ENCODE measurements at regions of chr11 and their contacts with region 1.

Region 1: GRCh38 chr11:60775420-60775961 is 9.6 kb upstream of the MS4A10 start:
- DNase-seq: peak; percentile 95 to 98 (median 97)
- H3K4me3 ChIP-seq: no peak overlapping the region
- H3K27ac ChIP-seq: no peak overlapping the region
- H3K4me1 ChIP-seq: peaks cover 0 to 3% (median 0%) of the 10 kb centered on the region in 4 experiments
- H3K27me3 ChIP-seq: peaks cover 0 to 2% (median 0%) of the 10 kb centered on the region in 5 experiments

Region 2: GRCh38 chr11:60762851-60763691 is 12.4 kb before region 1 on chr11:
- CTCF ChIA-PET with region 1: interaction called, 100 read pairs
- POLR2A ChIA-PET with region 1: no interaction called
- DNase-seq: peak; percentile 22 to 42 (median 38)
- H3K4me3 ChIP-seq: no peak overlapping the region
- H3K27ac ChIP-seq: no peak overlapping the region
- H3K4me1 ChIP-seq: peaks cover 4 to 22% (median 16%) of the 10 kb centered on the region in 4 experiments
- H3K27me3 ChIP-seq: peaks cover 0 to 4% (median 0%) of the 10 kb centered on the region in 5 experiments

Region 3: DNA sequence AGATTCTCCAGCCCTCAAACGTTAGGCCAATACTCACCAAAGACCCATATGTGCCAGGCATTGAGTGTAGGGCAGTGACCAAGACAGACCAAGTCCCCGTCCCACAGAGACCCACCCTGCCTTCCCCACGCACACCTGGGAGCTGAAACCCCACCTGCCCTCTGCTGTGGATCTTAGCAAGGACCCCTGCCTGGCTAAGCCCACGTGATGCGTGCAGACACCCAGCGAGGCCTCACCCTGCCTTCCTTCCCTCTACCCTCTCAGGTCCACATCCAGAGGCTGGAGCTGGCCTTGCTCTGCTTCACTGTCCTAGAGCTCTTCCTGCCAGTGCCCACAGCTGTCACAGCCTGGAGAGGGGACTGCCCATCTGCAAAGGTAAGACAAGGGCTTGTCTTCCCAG is 19.8 kb after region 1 on chr11:
- CTCF ChIA-PET with region 1: interaction called, 13 read pairs
- POLR2A ChIA-PET with region 1: no interaction called
- DNase-seq: no peak
- H3K4me3 ChIP-seq: no peak overlapping the region
- H3K27ac ChIP-seq: no peak overlapping the region
- H3K4me1 ChIP-seq: no peaks in the 10 kb centered on the region
- H3K27me3 ChIP-seq: peaks cover 0 to 7% (median 0%) of the 10 kb centered on the region in 5 experiments

Region 4: DNA sequence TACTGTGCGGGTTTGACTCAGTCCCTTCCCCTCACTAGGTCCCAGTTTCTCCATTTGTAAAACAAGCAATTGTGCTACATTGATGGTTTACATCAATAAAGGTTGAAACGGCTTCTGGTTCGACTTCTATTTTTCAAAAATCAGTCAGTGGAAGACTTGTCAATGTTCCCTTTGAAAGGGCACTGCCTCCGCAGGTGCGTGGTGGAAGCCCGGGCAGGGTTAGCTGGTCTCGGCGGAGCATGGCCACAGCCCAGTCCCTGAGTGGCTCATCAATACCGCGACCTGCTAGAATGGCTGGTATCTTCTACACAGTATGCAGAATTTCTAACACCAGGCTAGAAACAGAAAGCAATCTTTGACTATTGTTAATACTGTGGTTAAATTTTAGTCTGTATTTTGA is 25.7 kb after region 1 on chr11:
- CTCF ChIA-PET with region 1: interaction called, 15 read pairs
- POLR2A ChIA-PET with region 1: no interaction called
- DNase-seq: no peak
- H3K4me3 ChIP-seq: no peak overlapping the region
- H3K27ac ChIP-seq: no peak overlapping the region
- H3K4me1 ChIP-seq: peaks cover 0 to 3% (median 0%) of the 10 kb centered on the region in 4 experiments
- H3K27me3 ChIP-seq: peaks cover 0 to 2% (median 0%) of the 10 kb centered on the region in 5 experiments

Region 5: GRCh38 chr11:60831143-60831500 is 55.6 kb after region 1 on chr11:
- CTCF ChIA-PET with region 1: interaction called, 59 read pairs
- POLR2A ChIA-PET with region 1: no interaction called
- DNase-seq: peak; percentile 79 to 89 (median 83)
- H3K4me3 ChIP-seq: peak overlapping the region in 1 of 7 experiments; percentile 25
- H3K27ac ChIP-seq: no peak overlapping the region
- H3K4me1 ChIP-seq: no peaks in the 10 kb centered on the region
- H3K27me3 ChIP-seq: peaks cover 0 to 4% (median 0%) of the 10 kb centered on the region in 5 experiments

Region 6: DNA sequence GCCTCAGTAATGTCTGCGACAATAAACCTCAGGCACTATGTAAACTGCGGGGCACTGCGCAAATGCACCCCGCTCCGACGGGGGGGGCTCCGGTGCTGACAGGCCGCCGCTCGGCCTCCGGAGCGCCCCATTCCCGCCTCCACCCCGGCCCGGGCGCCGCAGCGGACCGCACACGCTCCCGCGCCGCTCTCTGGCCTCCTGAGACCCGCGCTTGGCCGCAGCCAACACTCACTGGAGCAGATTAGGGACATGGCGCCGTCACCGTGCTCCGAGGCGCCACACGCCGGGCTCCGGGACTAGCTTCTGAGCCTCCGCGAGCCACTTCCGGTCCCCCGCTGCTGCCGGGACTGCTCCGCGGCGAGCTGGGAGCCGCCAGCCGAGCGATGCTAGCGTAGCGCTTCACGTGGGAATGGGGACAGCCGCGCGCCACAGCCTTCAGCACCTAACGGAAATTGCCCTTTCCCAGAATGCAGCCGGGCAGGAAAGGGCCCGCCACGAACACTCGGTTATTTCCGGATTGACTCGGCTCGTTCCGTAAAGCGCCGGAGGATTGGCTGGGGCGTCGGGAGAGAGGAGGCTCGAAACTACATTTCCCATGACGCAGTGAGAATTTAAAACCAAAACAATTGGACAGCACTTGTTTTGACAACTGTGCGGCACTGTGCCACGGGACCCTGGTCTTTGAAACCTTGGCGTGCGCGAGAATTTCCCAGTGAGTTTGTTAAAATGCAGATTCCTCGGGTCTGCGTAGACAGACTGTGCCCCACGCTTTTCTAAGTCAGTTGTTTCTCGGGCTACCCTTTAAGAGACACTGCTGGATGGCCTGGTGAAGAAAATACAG is 130.9 kb after region 1 on chr11 and contains the start of gene PRPF19:
- CTCF ChIA-PET with region 1: interaction called, 10 read pairs
- POLR2A ChIA-PET with region 1: no interaction called
- DNase-seq: peak; percentile 96 to 99 (median 98)
- H3K4me3 ChIP-seq: peak within 1 kb of the TSS; percentile 75 to 92 (median 86)
- H3K27ac ChIP-seq: peak within 1 kb of the TSS; percentile 78 to 89
- H3K4me1 ChIP-seq: peaks cover 13 to 35% (median 28%) of the 10 kb centered on the region in 4 experiments
- H3K27me3 ChIP-seq: no peaks in the 10 kb centered on the region

Region 7: DNA sequence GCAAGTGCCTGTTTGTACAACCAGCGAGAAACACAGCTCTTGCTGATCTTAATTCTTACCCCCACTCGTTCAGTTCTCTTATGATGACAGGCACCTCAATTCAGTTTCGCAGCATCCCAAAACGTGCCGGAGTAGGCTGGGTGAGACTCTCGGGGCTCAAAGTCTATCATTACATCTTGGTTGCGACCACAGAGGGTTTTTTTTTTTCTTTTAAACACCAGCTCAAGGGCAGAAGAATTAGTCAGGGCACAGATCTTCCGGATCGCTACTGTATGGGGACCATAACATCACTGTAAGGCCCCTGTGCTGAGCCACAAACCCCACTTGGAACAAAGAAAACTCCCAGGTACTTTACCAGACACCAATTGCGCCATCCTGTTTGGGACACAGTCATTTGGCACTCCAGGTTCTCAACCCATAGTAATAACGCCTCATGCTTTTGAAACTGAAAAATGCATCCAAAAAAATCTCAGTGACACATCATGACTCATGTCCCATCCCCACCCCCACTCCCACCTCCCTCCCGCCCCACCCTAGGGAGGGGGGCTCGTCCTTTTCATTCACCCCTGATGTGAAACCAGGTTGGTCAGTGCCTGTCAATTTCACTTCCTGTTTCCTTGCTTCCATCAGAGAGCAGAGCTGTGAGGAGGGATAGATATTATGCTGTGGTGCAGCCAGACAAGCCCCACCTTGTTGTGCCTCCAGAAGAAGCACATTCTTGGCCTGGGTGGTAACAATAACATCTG is 285.8 kb after region 1 on chr11:
- CTCF ChIA-PET with region 1: no interaction called
- POLR2A ChIA-PET with region 1: no interaction called
- DNase-seq: peak; percentile 38 to 57 (median 48)
- H3K4me3 ChIP-seq: no peak overlapping the region
- H3K27ac ChIP-seq: no peak overlapping the region
- H3K4me1 ChIP-seq: no peaks in the 10 kb centered on the region
- H3K27me3 ChIP-seq: peaks cover 0 to 3% (median 0%) of the 10 kb centered on the region in 5 experiments